ENCODE measurements at regions of chr9 and their contacts with region 1.

Region 1: GRCh38 chr9:136410500-136411287 is at the starts of genes ENTR1 and PMPCA:
- DNase-seq: peak; percentile 66
- ATAC-seq: peak; percentile 78
- H3K4me3 ChIP-seq: peak within 1 kb of the TSS; percentile 96
- H3K27ac ChIP-seq: peak within 1 kb of the TSS; percentile 93
- H3K4me1 ChIP-seq: peaks cover 16% of the 10 kb centered on the region
- H3K27me3 ChIP-seq: no peaks in the 10 kb centered on the region
- CTCF ChIP-seq: no peak
- EP300 ChIP-seq: no peak
- POLR2A ChIP-seq: peak; percentile 93
- RAD21 ChIP-seq: no peak
- polyA plus RNA-seq, gene ENTR1: 8.2 to 20.4 TPM
- polyA plus RNA-seq, gene PMPCA: 8.1 to 12.3 TPM

Region 2: GRCh38 chr9:136363606-136364370 is 46.9 kb before region 1 on chr9 and contains the start of gene DNLZ:
- CTCF ChIA-PET with region 1: interaction called, 6 read pairs
- POLR2A ChIA-PET with region 1: interaction called, 10 read pairs
- RAD21 ChIA-PET with region 1: no interaction called
- SMC1A ChIA-PET with region 1: no interaction called
- in situ Hi-C with region 1: no loop called
- intact Hi-C with region 1: no loop called
- DNase-seq: peak; percentile 32
- ATAC-seq: peak; percentile 84
- H3K4me3 ChIP-seq: peak within 1 kb of the TSS; percentile 89
- H3K27ac ChIP-seq: peak within 1 kb of the TSS; percentile 90
- H3K4me1 ChIP-seq: peaks cover 10% of the 10 kb centered on the region
- H3K27me3 ChIP-seq: no peaks in the 10 kb centered on the region
- CTCF ChIP-seq: peak; percentile 90 to 98 (median 91)
- EP300 ChIP-seq: no peak
- POLR2A ChIP-seq: peak; percentile 81
- RAD21 ChIP-seq: peak; percentile 37; the same call in 1 of the 2 replicates
- polyA plus RNA-seq, gene DNLZ: 1.5 TPM in 1 of 2 experiments, not detected in the other

Region 3: GRCh38 chr9:136570916-136571315 is 160.2 kb after region 1 on chr9:
- CTCF ChIA-PET with region 1: no interaction called
- POLR2A ChIA-PET with region 1: no interaction called
- RAD21 ChIA-PET with region 1: no interaction called
- SMC1A ChIA-PET with region 1: no interaction called
- in situ Hi-C with region 1: no loop called
- intact Hi-C with region 1: no loop called
- DNase-seq: no peak
- ATAC-seq: no peak
- H3K4me3 ChIP-seq: no peak overlapping the region
- H3K27ac ChIP-seq: no peak overlapping the region
- H3K4me1 ChIP-seq: no peaks in the 10 kb centered on the region
- H3K27me3 ChIP-seq: no peaks in the 10 kb centered on the region
- CTCF ChIP-seq: no peak
- EP300 ChIP-seq: no peak
- POLR2A ChIP-seq: no peak
- RAD21 ChIP-seq: no peak